Heart left ventricle (tissue), 16 donors: ENCODE measurements at regions of chr3 and their contacts with region 1.

Region 1: GRCh38 chr3:194003125-194004057 is 132.6 kb upstream of the HES1 start:
- DNase-seq: peak; percentile 92 to 95 (median 93)
- ATAC-seq: peak; percentile 85 to 95 (median 94)
- H3K4me3 ChIP-seq: peak overlapping the region in 11 of 12 donors; percentile 1 to 54 (median 51)
- H3K27ac ChIP-seq: peak overlapping the region; percentile 40 to 85 (median 74)
- H3K4me1 ChIP-seq: peaks cover 0 to 42% (median 31%) of the 10 kb centered on the region in 12 donors
- H3K27me3 ChIP-seq: peaks cover 0 to 13% (median 0%) of the 10 kb centered on the region in 9 donors
- CTCF ChIP-seq: no peak
- POLR2A ChIP-seq: no peak

Region 2: DNA sequence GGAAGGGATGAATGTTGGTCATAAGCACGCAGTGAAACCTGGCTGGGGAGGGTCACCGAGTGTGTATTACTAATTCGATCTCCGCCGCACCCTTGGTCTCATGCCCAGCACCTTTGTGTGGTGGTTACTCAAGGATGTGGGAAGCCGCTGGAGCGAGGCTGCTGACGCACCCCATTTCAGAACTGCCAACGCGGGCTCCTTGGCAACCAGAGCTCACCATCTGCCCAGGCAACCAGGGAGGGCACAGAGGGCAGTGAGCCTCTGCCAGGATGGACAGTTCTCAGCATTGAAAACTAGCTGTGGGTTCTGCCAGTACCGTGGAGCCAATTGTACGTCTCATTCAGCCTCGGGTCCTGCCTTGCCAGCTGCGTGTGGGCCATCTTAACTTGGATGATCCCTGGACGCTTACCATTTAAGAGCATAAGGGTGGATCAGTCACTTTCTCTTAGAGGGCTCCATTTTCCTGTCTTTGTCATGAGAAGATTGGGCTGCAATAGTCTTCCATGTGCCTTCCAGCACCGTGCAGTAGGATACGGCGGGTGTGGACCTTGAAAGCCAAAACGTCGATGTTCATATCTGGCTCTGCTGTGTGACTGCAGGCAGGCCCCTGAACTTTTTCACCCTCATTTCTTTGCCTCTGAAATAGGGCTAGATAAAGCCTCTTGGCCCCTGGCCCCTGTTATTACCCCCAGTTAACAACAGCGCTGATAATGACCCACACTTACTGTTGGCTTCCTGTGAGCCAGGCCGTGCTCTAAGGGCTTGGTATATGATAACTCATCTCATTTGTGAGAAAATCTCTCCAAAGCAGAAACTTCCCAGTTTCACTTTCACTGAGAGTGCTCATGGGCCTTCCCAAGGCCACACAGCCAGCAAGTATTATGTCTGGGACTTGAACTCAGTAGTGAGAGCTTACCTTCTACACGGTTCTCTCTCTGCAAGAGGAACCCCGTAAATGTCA is 171.6 kb before region 1 on chr3:
- intact Hi-C with region 1: no loop called
- DNase-seq: peak in 1 of 5 donors; percentile 68
- ATAC-seq: peak in 3 of 4 donors; percentile 20 to 63 (median 62)
- H3K4me3 ChIP-seq: no peak overlapping the region
- H3K27ac ChIP-seq: peak overlapping the region in 1 of 12 donors; percentile 52
- H3K4me1 ChIP-seq: peaks cover 0 to 34% (median 13%) of the 10 kb centered on the region in 12 donors
- H3K27me3 ChIP-seq: peaks cover 0 to 6% (median 0%) of the 10 kb centered on the region in 9 donors
- CTCF ChIP-seq: no peak
- POLR2A ChIP-seq: no peak

Region 3: DNA sequence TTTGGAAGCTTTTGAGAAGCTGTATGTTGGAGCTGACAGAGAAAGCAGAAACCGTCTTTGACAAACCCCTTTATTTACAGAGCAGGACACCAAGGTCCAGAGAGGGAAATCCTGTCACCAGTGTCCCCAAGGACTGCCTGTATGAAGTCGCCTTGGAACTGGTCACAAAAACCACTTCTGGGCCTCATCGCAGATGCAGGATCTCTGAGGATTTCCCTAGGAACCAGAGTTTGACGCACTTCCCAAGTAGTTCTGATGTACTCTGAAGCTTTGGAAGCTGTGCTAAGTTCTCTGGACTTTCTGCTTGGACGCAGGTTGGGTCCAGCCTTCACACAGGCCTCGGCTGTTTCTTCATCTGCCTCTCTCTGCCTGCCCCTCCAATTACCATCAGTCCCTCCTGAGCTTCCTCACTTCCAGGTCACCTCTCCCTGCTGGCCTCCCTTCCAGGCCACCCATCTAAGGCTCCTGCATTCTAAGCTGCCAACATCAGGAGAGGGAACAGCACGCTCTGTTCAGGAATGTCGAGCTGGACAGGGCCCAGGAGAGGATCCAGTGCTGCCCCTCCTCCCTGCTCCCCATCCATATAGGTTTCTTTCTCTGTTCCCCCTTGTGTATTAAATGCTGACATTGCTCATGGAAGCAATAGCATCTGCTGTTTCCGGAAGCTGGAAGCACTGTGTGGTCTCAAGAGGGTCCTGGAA is 139.6 kb before region 1 on chr3:
- intact Hi-C with region 1: loop called in 1 of 10 experiments (anchors 5 kb)
- DNase-seq: peak in 4 of 5 donors; percentile 50 to 67 (median 64)
- ATAC-seq: peak; percentile 85 to 92 (median 88)
- H3K4me3 ChIP-seq: no peak overlapping the region
- H3K27ac ChIP-seq: peak overlapping the region in 10 of 12 donors; percentile 3 to 71 (median 52)
- H3K4me1 ChIP-seq: peaks cover 0 to 46% (median 25%) of the 10 kb centered on the region in 12 donors
- H3K27me3 ChIP-seq: peaks cover 0 to under 1% (median 0%) of the 10 kb centered on the region in 9 donors
- CTCF ChIP-seq: no peak
- POLR2A ChIP-seq: no peak

Region 4: GRCh38 chr3:194070634-194071409 is 67.4 kb after region 1 on chr3:
- intact Hi-C with region 1: loop called in 7 of 10 experiments (anchors 2 to 10 kb)
- DNase-seq: peak; percentile 88 to 93 (median 93)
- ATAC-seq: peak; percentile 89 to 92 (median 92)
- H3K4me3 ChIP-seq: peak overlapping the region; percentile 8 to 64 (median 53)
- H3K27ac ChIP-seq: peak overlapping the region; percentile 67 to 97 (median 86)
- H3K4me1 ChIP-seq: peaks cover 3 to 23% (median 15%) of the 10 kb centered on the region in 12 donors
- H3K27me3 ChIP-seq: peaks cover 0 to 29% (median 0%) of the 10 kb centered on the region in 9 donors
- CTCF ChIP-seq: no peak
- POLR2A ChIP-seq: no peak

Region 5: GRCh38 chr3:194255252-194256039 is 252.1 kb after region 1 on chr3:
- intact Hi-C with region 1: loop called in 1 of 10 experiments (anchors 10 kb)
- DNase-seq: peak; percentile 82 to 89 (median 88)
- ATAC-seq: peak; percentile 61 to 91 (median 79)
- H3K4me3 ChIP-seq: peak overlapping the region in 1 of 12 donors; percentile 34
- H3K27ac ChIP-seq: peak overlapping the region in 9 of 12 donors; percentile 7 to 73 (median 62)
- H3K4me1 ChIP-seq: peaks cover 0 to 32% (median 18%) of the 10 kb centered on the region in 12 donors
- H3K27me3 ChIP-seq: no peaks in the 10 kb centered on the region
- CTCF ChIP-seq: peak in 1 of 12 donors; percentile 14
- POLR2A ChIP-seq: no peak

Region 6: GRCh38 chr3:194306109-194306686 is 302.8 kb after region 1 on chr3:
- intact Hi-C with region 1: loop called in 7 of 10 experiments (anchors 10 kb)
- DNase-seq: peak in 1 of 5 donors; percentile 15
- ATAC-seq: peak in 1 of 4 donors; percentile 12
- H3K4me3 ChIP-seq: no peak overlapping the region
- H3K27ac ChIP-seq: no peak overlapping the region
- H3K4me1 ChIP-seq: peaks cover 0 to 18% (median 0%) of the 10 kb centered on the region in 12 donors
- H3K27me3 ChIP-seq: peaks cover 0 to 20% (median 0%) of the 10 kb centered on the region in 9 donors
- CTCF ChIP-seq: no peak
- POLR2A ChIP-seq: no peak